Prostate gland (tissue), 2 donors: ENCODE measurements at regions of chr19 and their contacts with region 1.

Region 1: GRCh38 chr19:4576016-4576933 is 16.8 kb upstream of the SEMA6B start:
- DNase-seq: peak; percentile 34
- H3K4me3 ChIP-seq: no peak overlapping the region
- H3K27ac ChIP-seq: no peak overlapping the region
- H3K4me1 ChIP-seq: no peaks in the 10 kb centered on the region
- H3K27me3 ChIP-seq: peaks cover 10% of the 10 kb centered on the region
- CTCF ChIP-seq: peak in 3 of 4 experiments; percentile 43 to 64 (median 63)
- POLR2A ChIP-seq: no peak

Region 2: GRCh38 chr19:4482721-4483364 is 93.4 kb before region 1 on chr19:
- intact Hi-C with region 1: no loop called
- DNase-seq: no peak
- H3K4me3 ChIP-seq: no peak overlapping the region
- H3K27ac ChIP-seq: no peak overlapping the region
- H3K4me1 ChIP-seq: no peaks in the 10 kb centered on the region
- H3K27me3 ChIP-seq: no peaks in the 10 kb centered on the region
- CTCF ChIP-seq: no peak
- POLR2A ChIP-seq: no peak

Region 3: GRCh38 chr19:4638828-4639530 is 62.7 kb after region 1 on chr19 and contains the start of gene TNFAIP8L1:
- intact Hi-C with region 1: loop called (anchors 5 kb)
- DNase-seq: peak; percentile 95
- H3K4me3 ChIP-seq: peak within 1 kb of the TSS; percentile 39 to 52
- H3K27ac ChIP-seq: peak within 1 kb of the TSS; percentile 45 to 50
- H3K4me1 ChIP-seq: no peaks in the 10 kb centered on the region
- H3K27me3 ChIP-seq: no peaks in the 10 kb centered on the region
- CTCF ChIP-seq: no peak
- POLR2A ChIP-seq: no peak
- total RNA-seq, gene TNFAIP8L1: 4.0 to 6.2 TPM